ENCODE measurements at regions of chr18 and their contacts with region 1.

Region 1: GRCh38 chr18:55589625-55590291 is 1.8 kb upstream of the TCF4 start:
- H3K4me3 Mint-ChIP-seq: peak overlapping the region; percentile 81
- H3K27ac Mint-ChIP-seq: peak overlapping the region; percentile 86
- H3K4me1 Mint-ChIP-seq: peaks cover 33% of the 10 kb centered on the region
- H3K27me3 Mint-ChIP-seq: no peaks in the 10 kb centered on the region

Region 2: GRCh38 chr18:55289775-55290174 is 300.0 kb before region 1 on chr18:
- intact Hi-C with region 1: no loop called
- H3K4me3 Mint-ChIP-seq: no peak overlapping the region
- H3K27ac Mint-ChIP-seq: no peak overlapping the region
- H3K4me1 Mint-ChIP-seq: peaks cover 6% of the 10 kb centered on the region
- H3K27me3 Mint-ChIP-seq: no peaks in the 10 kb centered on the region

Region 3: GRCh38 chr18:55322178-55322735 is 267.5 kb before region 1 on chr18:
- intact Hi-C with region 1: loop called (anchors 2 kb)
- H3K4me3 Mint-ChIP-seq: peak overlapping the region; percentile 94
- H3K27ac Mint-ChIP-seq: peak overlapping the region; percentile 83
- H3K4me1 Mint-ChIP-seq: peaks cover 23% of the 10 kb centered on the region
- H3K27me3 Mint-ChIP-seq: no peaks in the 10 kb centered on the region

Region 4: GRCh38 chr18:55415258-55415871 is 174.4 kb before region 1 on chr18:
- intact Hi-C with region 1: loop called (anchors 10 kb)
- H3K4me3 Mint-ChIP-seq: no peak overlapping the region
- H3K27ac Mint-ChIP-seq: no peak overlapping the region
- H3K4me1 Mint-ChIP-seq: peaks cover 13% of the 10 kb centered on the region
- H3K27me3 Mint-ChIP-seq: no peaks in the 10 kb centered on the region

Region 5: GRCh38 chr18:55781481-55781957 is 191.8 kb after region 1 on chr18:
- intact Hi-C with region 1: loop called (anchors 5 kb)
- H3K4me3 Mint-ChIP-seq: no peak overlapping the region
- H3K27ac Mint-ChIP-seq: no peak overlapping the region
- H3K4me1 Mint-ChIP-seq: peaks cover 19% of the 10 kb centered on the region
- H3K27me3 Mint-ChIP-seq: peaks cover 24% of the 10 kb centered on the region

Region 6: DNA sequence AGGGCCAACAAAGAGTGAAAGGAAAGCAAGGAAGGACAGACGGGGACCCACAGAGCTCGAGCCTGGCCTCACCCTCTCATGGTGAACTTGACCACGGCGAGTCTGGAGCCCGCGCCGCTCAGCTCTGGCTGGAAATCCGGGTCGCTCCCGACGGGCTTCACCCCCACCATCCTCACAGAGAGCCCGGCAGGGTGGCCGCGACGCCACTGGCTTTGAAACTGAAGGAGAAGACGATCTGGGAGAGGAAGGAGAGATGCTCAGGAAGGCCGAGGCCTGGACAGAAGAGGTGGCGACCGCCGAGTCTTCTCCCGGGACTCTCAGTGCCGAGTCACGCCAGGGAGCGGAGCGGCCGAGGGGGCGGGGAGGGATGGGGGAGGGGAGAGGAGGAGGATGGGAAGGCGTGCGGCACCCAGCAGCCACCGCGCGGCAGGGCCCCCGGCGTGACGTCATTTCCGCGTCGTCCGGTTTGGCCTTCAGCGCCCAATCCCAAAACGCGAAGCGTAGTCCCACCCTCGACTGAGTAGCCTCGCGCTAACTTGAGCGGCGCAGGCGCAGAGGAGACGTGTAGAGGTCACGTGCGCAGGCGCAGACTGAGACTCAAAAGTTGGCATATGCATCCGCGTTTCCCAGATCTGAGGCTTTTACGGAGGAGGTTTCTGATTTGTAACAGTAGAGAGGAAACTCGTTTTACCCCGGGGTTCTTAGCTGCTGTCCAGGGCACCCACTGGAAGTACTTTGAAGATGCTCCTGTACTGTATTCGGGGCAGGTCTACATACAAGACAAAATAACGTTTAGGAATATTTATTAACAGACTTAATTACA is 1048.7 kb after region 1 on chr18 and contains the start of gene TXNL1:
- intact Hi-C with region 1: loop called (anchors 10 kb)
- H3K4me3 Mint-ChIP-seq: peak within 1 kb of the TSS; percentile 99
- H3K27ac Mint-ChIP-seq: peak within 1 kb of the TSS; percentile 100
- H3K4me1 Mint-ChIP-seq: peaks cover 34% of the 10 kb centered on the region
- H3K27me3 Mint-ChIP-seq: no peaks in the 10 kb centered on the region

Measured in dendritic cell treated with granulocyte-macrophage colony-stimulating factor and Interleukin-4, amounts not matched to agents 40 ng/mL and 50 ng/mL, for 4 days (primary cell).